GM12878 (cell line): ENCODE measurements at regions of chr7 and their contacts with region 1.

Region 1: DNA sequence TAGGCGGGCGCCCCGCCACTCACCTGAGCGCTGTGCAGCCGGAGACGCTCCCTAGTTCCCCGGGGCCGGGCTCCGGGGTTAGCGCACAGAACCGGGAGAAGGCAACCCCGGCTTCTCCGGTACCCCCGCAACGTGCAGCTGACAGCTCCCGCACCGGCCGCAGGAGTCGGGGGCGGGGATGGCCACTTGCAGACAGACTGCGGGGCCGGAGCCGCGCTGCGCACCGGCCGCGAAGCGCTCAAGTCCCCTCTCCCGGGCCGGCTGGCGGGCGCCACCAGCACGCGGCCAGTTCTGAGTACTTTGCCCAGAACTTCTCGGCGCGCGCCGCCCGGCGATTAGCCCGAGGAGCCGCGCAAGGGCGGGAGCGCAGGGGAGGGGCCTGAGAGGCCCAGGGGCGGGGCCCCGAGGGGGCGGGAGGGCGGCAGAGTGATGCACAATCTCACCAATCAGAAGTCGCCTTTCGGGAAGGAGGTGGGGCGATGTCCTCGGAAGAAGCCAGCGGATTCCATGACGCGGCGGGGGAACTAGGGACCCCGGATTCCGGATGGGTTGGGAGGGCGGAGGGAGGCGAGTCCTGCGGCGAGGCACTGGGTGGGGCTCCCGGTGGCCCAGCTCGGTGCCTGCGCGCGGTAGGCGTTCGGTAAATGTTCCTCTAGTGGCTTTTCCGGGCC is at the start of gene OSBPL3:
- DNase-seq: peak; percentile 78
- ATAC-seq: peak; percentile 81
- H3K4me3 ChIP-seq: peak within 1 kb of the TSS; percentile 78
- H3K27ac ChIP-seq: peak within 1 kb of the TSS; percentile 78
- H3K4me1 ChIP-seq: peaks cover 5% of the 10 kb centered on the region
- H3K27me3 ChIP-seq: no peaks in the 10 kb centered on the region
- CTCF ChIP-seq: peak in 1 of 3 experiments; percentile 44; a peak in 2 of 6 replicates
- EP300 ChIP-seq: no peak
- POLR2A ChIP-seq: peak; percentile 87
- RAD21 ChIP-seq: peak; percentile 48
- polyA plus RNA-seq, gene OSBPL3: 6.1 to 15.2 TPM

Region 2: GRCh38 chr7:24819916-24820689 is 159.9 kb before region 1 on chr7:
- CTCF ChIA-PET with region 1: interaction called, 129 read pairs
- POLR2A ChIA-PET with region 1: interaction called, 30 read pairs
- RAD21 ChIA-PET with region 1: interaction called, 106 read pairs
- SMC1A ChIA-PET with region 1: interaction called, 103 read pairs
- in situ Hi-C with region 1: loop called (anchors 5 kb)
- intact Hi-C with region 1: loop called (anchors 1 kb)
- DNase-seq: no peak
- ATAC-seq: peak; percentile 84
- H3K4me3 ChIP-seq: no peak overlapping the region
- H3K27ac ChIP-seq: peak overlapping the region; percentile 81
- H3K4me1 ChIP-seq: peaks cover 21% of the 10 kb centered on the region
- H3K27me3 ChIP-seq: no peaks in the 10 kb centered on the region
- CTCF ChIP-seq: peak; percentile 82 to 95 (median 87)
- EP300 ChIP-seq: peak in 1 of 2 experiments; percentile 33; a peak in 1 of 4 replicates
- POLR2A ChIP-seq: no peak
- RAD21 ChIP-seq: peak; percentile 99

Region 3: DNA sequence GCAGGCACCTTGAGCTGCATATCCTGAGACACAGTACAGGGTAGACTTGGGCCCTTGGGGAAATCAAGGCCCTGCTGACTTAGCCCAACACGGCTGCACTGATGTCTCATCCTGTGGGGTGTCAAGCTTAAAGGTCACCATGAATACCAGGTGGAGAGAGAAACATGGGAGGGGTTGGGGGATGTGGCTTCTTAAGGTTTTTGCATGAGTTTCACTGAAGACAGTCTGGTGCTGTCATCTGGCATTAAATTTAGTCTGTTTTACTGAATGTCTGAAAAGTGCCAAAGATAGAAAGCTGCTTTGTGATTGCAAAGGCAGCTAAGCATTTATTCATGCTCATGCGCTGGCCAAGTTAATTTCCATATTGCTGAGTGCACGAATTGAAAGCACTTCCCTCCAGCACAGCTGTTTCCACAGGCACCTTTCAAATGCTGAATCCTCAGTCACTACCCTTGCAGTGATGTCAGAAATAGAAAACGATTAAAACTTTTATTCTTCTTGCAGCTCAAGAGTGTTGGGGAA is 102.1 kb before region 1 on chr7:
- CTCF ChIA-PET with region 1: interaction called, 12 read pairs
- POLR2A ChIA-PET with region 1: interaction called, 3 read pairs
- RAD21 ChIA-PET with region 1: interaction called, 19 read pairs
- SMC1A ChIA-PET with region 1: interaction called, 37 read pairs
- in situ Hi-C with region 1: no loop called
- intact Hi-C with region 1: no loop called
- DNase-seq: peak; percentile 62
- ATAC-seq: peak; percentile 88
- H3K4me3 ChIP-seq: no peak overlapping the region; the same call in 1 of the 2 replicates
- H3K27ac ChIP-seq: peak overlapping the region; percentile 5; the same call in 1 of the 2 replicates
- H3K4me1 ChIP-seq: peaks cover 16% of the 10 kb centered on the region
- H3K27me3 ChIP-seq: no peaks in the 10 kb centered on the region
- CTCF ChIP-seq: no peak
- EP300 ChIP-seq: no peak
- POLR2A ChIP-seq: no peak
- RAD21 ChIP-seq: no peak

Region 4: GRCh38 chr7:24917510-24918239 is 62.3 kb before region 1 on chr7:
- CTCF ChIA-PET with region 1: interaction called, 60 read pairs
- POLR2A ChIA-PET with region 1: interaction called, 4 read pairs
- RAD21 ChIA-PET with region 1: interaction called, 10 read pairs
- SMC1A ChIA-PET with region 1: interaction called, 34 read pairs
- in situ Hi-C with region 1: no loop called
- intact Hi-C with region 1: no loop called
- DNase-seq: no peak
- ATAC-seq: peak; percentile 66
- H3K4me3 ChIP-seq: peak overlapping the region; percentile 9; the same call in 1 of the 2 replicates
- H3K27ac ChIP-seq: peak overlapping the region; percentile 13
- H3K4me1 ChIP-seq: peaks cover 69% of the 10 kb centered on the region
- H3K27me3 ChIP-seq: no peaks in the 10 kb centered on the region
- CTCF ChIP-seq: no peak
- EP300 ChIP-seq: no peak
- POLR2A ChIP-seq: no peak
- RAD21 ChIP-seq: no peak

Region 5: DNA sequence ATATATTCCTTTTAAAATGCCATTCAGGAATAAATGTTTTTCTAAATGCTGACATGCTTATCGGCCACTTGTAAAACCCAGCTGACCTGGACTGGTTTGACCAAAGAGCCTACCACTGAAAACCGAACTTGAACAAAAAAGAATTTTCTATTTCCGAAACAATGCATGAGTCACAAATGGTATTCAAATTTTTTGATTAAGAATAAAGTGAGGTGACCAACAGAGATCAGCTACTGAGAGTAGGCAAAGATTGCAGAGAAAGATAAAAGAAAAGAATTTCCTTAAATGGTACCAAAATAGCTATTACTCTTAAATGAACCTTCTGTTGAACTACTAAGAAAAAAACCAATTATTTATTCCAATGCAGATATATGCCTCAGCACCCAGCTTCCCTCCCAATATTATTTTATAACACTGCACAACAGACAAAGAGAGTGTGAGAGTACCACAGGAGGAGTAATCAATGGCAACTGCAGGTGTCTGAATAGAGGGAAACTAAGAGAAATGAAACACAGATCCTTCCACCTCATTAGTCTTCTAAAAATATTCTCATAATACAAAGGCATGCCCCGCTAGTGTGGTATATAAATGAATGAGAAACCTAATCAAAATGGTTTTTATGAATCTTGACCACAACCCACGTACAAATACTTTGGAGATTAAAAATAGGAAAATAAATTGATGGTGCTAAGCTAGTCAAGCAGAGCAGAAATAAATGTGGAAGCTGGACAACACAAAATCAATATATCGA is 20.1 kb before region 1 on chr7:
- CTCF ChIA-PET with region 1: interaction called, 14 read pairs
- POLR2A ChIA-PET with region 1: interaction called, 68 read pairs
- RAD21 ChIA-PET with region 1: interaction called, 106 read pairs
- SMC1A ChIA-PET with region 1: interaction called, 189 read pairs
- in situ Hi-C with region 1: no loop called
- intact Hi-C with region 1: no loop called
- DNase-seq: no peak
- ATAC-seq: no peak
- H3K4me3 ChIP-seq: no peak overlapping the region
- H3K27ac ChIP-seq: no peak overlapping the region
- H3K4me1 ChIP-seq: peaks cover 18% of the 10 kb centered on the region
- H3K27me3 ChIP-seq: no peaks in the 10 kb centered on the region
- CTCF ChIP-seq: no peak
- EP300 ChIP-seq: no peak
- POLR2A ChIP-seq: no peak
- RAD21 ChIP-seq: no peak

Region 6: DNA sequence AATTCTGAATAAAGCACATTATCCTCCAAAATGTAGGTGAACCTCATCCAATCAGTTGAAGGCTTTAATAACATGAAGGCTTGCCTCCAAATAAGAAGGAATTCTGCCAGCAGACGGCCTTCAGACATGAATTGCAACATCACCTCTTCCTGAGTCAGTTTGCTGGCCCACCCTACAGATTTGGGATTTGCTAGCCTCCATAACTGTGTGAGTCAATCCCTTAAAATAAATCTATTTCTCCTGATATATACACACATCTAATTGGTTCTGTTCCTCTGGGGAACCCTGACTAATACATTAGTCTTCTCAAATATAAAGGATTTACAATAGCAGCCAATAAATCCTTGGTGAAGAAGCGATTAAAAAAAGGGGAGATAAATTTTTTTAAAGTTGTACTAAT is 34.8 kb after region 1 on chr7:
- CTCF ChIA-PET with region 1: no interaction called
- POLR2A ChIA-PET with region 1: no interaction called
- RAD21 ChIA-PET with region 1: no interaction called
- SMC1A ChIA-PET with region 1: no interaction called
- in situ Hi-C with region 1: no loop called
- intact Hi-C with region 1: no loop called
- DNase-seq: no peak
- ATAC-seq: no peak
- H3K4me3 ChIP-seq: no peak overlapping the region
- H3K27ac ChIP-seq: no peak overlapping the region
- H3K4me1 ChIP-seq: no peaks in the 10 kb centered on the region
- H3K27me3 ChIP-seq: no peaks in the 10 kb centered on the region; a peak in 1 of 4 replicates
- CTCF ChIP-seq: no peak
- EP300 ChIP-seq: no peak
- POLR2A ChIP-seq: no peak
- RAD21 ChIP-seq: no peak

Region 7: GRCh38 chr7:25069900-25070443 is 90.0 kb after region 1 on chr7:
- CTCF ChIA-PET with region 1: interaction called, 18 read pairs
- POLR2A ChIA-PET with region 1: interaction called, 4 read pairs
- RAD21 ChIA-PET with region 1: interaction called, 38 read pairs
- SMC1A ChIA-PET with region 1: interaction called, 22 read pairs
- in situ Hi-C with region 1: no loop called
- intact Hi-C with region 1: loop called (anchors 2 kb)
- DNase-seq: no peak
- ATAC-seq: peak; percentile 79
- H3K4me3 ChIP-seq: no peak overlapping the region
- H3K27ac ChIP-seq: no peak overlapping the region
- H3K4me1 ChIP-seq: no peaks in the 10 kb centered on the region
- H3K27me3 ChIP-seq: no peaks in the 10 kb centered on the region; a peak in 1 of 4 replicates
- CTCF ChIP-seq: peak; percentile 72 to 82 (median 78)
- EP300 ChIP-seq: no peak
- POLR2A ChIP-seq: no peak
- RAD21 ChIP-seq: peak; percentile 86

Region 8: DNA sequence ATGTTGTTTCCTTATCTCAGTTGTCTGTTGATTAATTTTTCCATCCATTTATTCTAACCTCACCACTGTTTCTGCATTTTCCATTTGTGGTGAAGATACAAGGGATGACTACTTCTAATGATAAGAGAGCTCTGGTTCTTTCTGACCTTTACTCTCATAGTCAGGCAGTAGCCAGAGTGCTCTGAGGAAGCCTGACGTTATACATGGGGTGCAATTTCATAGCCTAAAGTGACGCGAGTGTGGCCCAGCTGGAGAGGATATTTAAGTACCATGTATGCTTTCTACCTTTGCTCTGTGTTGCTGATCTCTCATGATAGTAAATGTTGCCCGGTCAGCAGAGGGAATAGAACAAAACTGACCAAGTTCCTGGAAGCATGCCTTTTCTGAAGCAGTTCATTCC is 179.0 kb after region 1 on chr7:
- CTCF ChIA-PET with region 1: interaction called, 10 read pairs
- POLR2A ChIA-PET with region 1: no interaction called
- RAD21 ChIA-PET with region 1: no interaction called
- SMC1A ChIA-PET with region 1: no interaction called
- in situ Hi-C with region 1: no loop called
- intact Hi-C with region 1: no loop called
- DNase-seq: no peak
- ATAC-seq: no peak
- H3K4me3 ChIP-seq: no peak overlapping the region
- H3K27ac ChIP-seq: no peak overlapping the region
- H3K4me1 ChIP-seq: no peaks in the 10 kb centered on the region
- H3K27me3 ChIP-seq: no peaks in the 10 kb centered on the region
- CTCF ChIP-seq: no peak
- EP300 ChIP-seq: no peak
- POLR2A ChIP-seq: no peak
- RAD21 ChIP-seq: no peak